Mucosa of descending colon (tissue), 3 donors: ENCODE measurements at regions of chr7 and their contacts with region 1.

Region 1: GRCh38 chr7:130896898-130897514 is 163.0 kb upstream of the KLF14 start:
- DNase-seq: peak; percentile 71 to 89 (median 86)
- ATAC-seq: peak; percentile 57
- H3K4me3 ChIP-seq: no peak overlapping the region
- H3K4me1 ChIP-seq: peaks cover 82% of the 10 kb centered on the region
- CTCF ChIP-seq: peak; percentile 59

Region 2: DNA sequence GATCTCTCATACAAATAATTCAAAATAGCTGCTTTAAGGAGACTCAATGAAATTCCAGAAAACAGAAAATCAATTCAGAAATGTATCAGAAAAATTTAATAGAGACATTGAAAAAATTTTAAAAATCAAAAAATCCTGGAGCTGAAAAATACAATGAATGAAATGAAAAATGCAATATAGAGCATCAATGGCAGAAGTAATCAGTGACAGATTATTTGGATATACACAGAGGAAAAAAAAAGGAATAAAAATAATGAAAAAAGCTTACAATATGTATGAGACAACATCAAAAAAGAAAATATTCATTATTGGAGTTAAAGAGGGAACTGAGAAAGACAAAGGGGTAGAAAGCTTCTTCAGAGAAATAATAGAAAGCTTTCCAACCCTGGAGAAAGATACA is 40.1 kb before region 1 on chr7:
- intact Hi-C with region 1: no loop called
- DNase-seq: no peak
- ATAC-seq: no peak
- H3K4me3 ChIP-seq: no peak overlapping the region
- H3K4me1 ChIP-seq: no peaks in the 10 kb centered on the region
- CTCF ChIP-seq: no peak

Region 3: GRCh38 chr7:131040467-131040932 is 143.5 kb after region 1 on chr7:
- intact Hi-C with region 1: loop called (anchors 10 kb)
- DNase-seq: peak in 2 of 3 donors; percentile 48 to 93
- ATAC-seq: peak; percentile 97
- H3K4me3 ChIP-seq: no peak overlapping the region
- H3K4me1 ChIP-seq: peaks cover 19% of the 10 kb centered on the region
- CTCF ChIP-seq: peak; percentile 89